Mammary epithelial cell (primary cell): ENCODE measurements at regions of chr11 and their contacts with region 1.

Region 1: GRCh38 chr11:68312117-68312779 is at the start of gene LRP5:
- DNase-seq: no peak
- H3K4me3 ChIP-seq: peak within 1 kb of the TSS; percentile 62 to 67 (median 64)
- H3K27ac ChIP-seq: peak within 1 kb of the TSS; percentile 69
- H3K4me1 ChIP-seq: peaks cover 35% of the 10 kb centered on the region
- H3K27me3 ChIP-seq: no peaks in the 10 kb centered on the region
- CTCF ChIP-seq: no peak
- total RNA-seq, gene LRP5: 32.6 to 41.7 TPM

Region 2: DNA sequence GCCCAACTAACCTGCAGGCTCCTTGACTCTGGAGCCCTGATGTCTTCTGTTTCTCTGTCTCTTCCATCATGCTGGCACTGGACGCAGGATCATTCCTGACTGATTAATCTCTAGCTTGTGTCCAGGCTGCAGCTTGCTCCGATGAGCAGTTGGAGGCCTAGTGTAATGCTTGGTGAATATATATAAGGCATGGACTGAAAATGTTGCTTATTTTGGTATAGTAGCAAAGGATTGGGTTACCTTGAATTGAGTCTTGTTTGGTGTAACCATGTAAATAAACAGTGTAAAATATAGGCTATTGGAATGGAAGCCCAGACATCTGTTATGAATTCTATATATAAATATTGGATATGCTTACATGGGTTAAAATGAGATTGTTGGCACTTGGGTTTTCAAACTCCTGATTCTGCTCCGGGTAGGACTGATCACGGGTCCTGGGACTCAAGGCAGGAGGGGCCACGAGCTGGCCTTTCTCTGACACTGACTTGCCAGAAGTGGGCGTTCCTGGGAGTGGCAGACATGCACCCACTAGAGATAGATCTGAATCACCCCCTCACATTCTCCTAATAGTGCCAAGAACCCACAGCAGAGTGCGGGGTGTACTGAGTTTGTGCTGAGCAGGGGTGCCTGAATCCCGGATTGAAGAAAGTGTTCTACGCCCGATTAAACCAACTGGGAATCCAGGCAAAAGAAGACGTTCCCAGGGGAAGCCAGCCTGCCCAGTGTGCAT is 26.0 kb after region 1 on chr11:
- CTCF ChIA-PET with region 1: no interaction called
- dilution Hi-C with region 1: no loop called
- in situ Hi-C with region 1: no loop called
- intact Hi-C with region 1: loop called (anchors 2 kb)
- DNase-seq: peak; percentile 71
- H3K4me3 ChIP-seq: no peak overlapping the region
- H3K27ac ChIP-seq: peak overlapping the region; percentile 79
- H3K4me1 ChIP-seq: peaks cover 45% of the 10 kb centered on the region
- H3K27me3 ChIP-seq: no peaks in the 10 kb centered on the region
- CTCF ChIP-seq: no peak